CD8-positive, alpha-beta T cell (primary cell): ENCODE measurements at regions of chr17 and their contacts with region 1.

Region 1: GRCh38 chr17:68035523-68036303 is at the start of gene KPNA2:
- DNase-seq: peak; percentile 80 to 96 (median 89)
- ATAC-seq: peak; percentile 84
- H3K4me3 ChIP-seq: peak within 1 kb of the TSS; percentile 97 to 99
- H3K4me3 Mint-ChIP-seq: peak within 1 kb of the TSS; percentile 90
- H3K27ac ChIP-seq: peak within 1 kb of the TSS; percentile 88 to 90
- H3K27ac Mint-ChIP-seq: peak within 1 kb of the TSS; percentile 95
- H3K4me1 ChIP-seq: peaks cover 8% of the 10 kb centered on the region
- H3K4me1 Mint-ChIP-seq: peaks cover 13% of the 10 kb centered on the region
- H3K27me3 ChIP-seq: no peaks in the 10 kb centered on the region
- H3K27me3 Mint-ChIP-seq: no peaks in the 10 kb centered on the region
- CTCF ChIP-seq: no peak
- total RNA-seq, gene KPNA2: 111 to 121 TPM

Region 2: GRCh38 chr17:67717624-67718329 is 317.9 kb before region 1 on chr17 and contains the start of gene NOL11:
- CTCF ChIA-PET with region 1: no interaction called
- POLR2A ChIA-PET with region 1: no interaction called
- intact Hi-C with region 1: loop called in 1 of 2 experiments (anchors 2 kb)
- DNase-seq: peak; percentile 99 to 100 (median 99)
- ATAC-seq: peak; percentile 94
- H3K4me3 ChIP-seq: peak within 1 kb of the TSS; percentile 93 to 98
- H3K4me3 Mint-ChIP-seq: peak within 1 kb of the TSS; percentile 99
- H3K27ac ChIP-seq: peak within 1 kb of the TSS; percentile 90 to 96
- H3K27ac Mint-ChIP-seq: peak within 1 kb of the TSS; percentile 99
- H3K4me1 ChIP-seq: peaks cover 20% of the 10 kb centered on the region
- H3K4me1 Mint-ChIP-seq: peaks cover 32% of the 10 kb centered on the region
- H3K27me3 ChIP-seq: no peaks in the 10 kb centered on the region
- H3K27me3 Mint-ChIP-seq: peaks cover 5% of the 10 kb centered on the region
- CTCF ChIP-seq: peak; percentile 72
- total RNA-seq, gene NOL11: 91.0 to 94.0 TPM

Region 3: DNA sequence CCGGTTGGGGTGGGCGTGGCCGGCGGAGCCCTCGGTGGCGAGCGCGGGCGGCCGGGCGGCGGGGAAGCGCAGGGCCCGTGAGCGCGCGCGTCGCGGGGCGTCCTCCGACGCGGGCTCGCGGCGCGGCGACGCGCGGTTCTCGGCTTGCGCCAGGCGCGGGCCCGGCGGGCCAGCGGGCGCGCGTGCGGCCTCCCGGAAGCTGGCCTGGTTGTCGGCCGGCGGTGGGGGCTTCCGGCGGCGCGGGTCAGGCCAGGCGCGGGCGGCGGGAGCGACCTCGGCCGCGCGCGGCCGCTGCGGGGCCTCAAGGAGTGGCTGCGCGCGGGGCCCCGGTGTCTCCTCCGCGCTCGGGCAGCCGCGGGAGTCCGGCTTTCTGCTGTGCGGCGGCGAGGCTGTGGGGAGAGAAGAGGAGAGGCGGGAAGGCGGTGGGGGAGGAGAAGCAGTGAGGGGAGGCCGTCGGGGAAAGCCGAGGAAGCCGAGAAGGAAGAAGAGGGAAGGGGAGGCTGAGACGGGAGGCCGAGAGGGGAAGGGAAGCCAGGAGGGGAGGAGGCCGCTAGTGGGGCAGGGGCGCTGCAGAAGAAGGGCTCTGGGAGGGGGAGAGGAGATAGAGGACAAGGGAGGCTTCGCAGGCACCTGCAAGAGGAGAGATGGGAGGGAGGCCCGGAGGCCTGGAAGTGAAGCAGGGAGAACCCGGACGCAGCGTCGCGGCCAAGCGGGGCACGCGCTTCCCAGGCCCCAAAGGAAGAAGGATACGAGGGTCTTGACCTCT is 41.9 kb before region 1 on chr17:
- CTCF ChIA-PET with region 1: no interaction called
- POLR2A ChIA-PET with region 1: interaction called, 4 read pairs
- intact Hi-C with region 1: loop called in 1 of 2 experiments (anchors 1 kb)
- DNase-seq: peak in 4 of 9 experiments; percentile 57 to 89 (median 63)
- ATAC-seq: peak; percentile 59
- H3K4me3 ChIP-seq: peak overlapping the region; percentile 60 to 65
- H3K4me3 Mint-ChIP-seq: peak overlapping the region; percentile 86
- H3K27ac ChIP-seq: peak overlapping the region; percentile 42 to 65
- H3K27ac Mint-ChIP-seq: peak overlapping the region; percentile 22
- H3K4me1 ChIP-seq: peaks cover 28% of the 10 kb centered on the region
- H3K4me1 Mint-ChIP-seq: peaks cover 32% of the 10 kb centered on the region
- H3K27me3 ChIP-seq: no peaks in the 10 kb centered on the region
- H3K27me3 Mint-ChIP-seq: peaks cover 20% of the 10 kb centered on the region
- CTCF ChIP-seq: no peak

Region 4: GRCh38 chr17:68101075-68101992 is 65.6 kb after region 1 on chr17:
- CTCF ChIA-PET with region 1: no interaction called
- POLR2A ChIA-PET with region 1: no interaction called
- intact Hi-C with region 1: loop called (anchors 2 to 5 kb)
- DNase-seq: peak; percentile 38 to 83 (median 67)
- ATAC-seq: peak; percentile 70
- H3K4me3 ChIP-seq: peak overlapping the region; percentile 75 to 83
- H3K4me3 Mint-ChIP-seq: peak overlapping the region; percentile 96
- H3K27ac ChIP-seq: peak overlapping the region; percentile 73 to 88
- H3K27ac Mint-ChIP-seq: peak overlapping the region; percentile 97
- H3K4me1 ChIP-seq: peaks cover 12% of the 10 kb centered on the region
- H3K4me1 Mint-ChIP-seq: peaks cover 42% of the 10 kb centered on the region
- H3K27me3 ChIP-seq: no peaks in the 10 kb centered on the region
- H3K27me3 Mint-ChIP-seq: no peaks in the 10 kb centered on the region
- CTCF ChIP-seq: no peak

Region 5: GRCh38 chr17:68133346-68134045 is 97.8 kb after region 1 on chr17:
- CTCF ChIA-PET with region 1: no interaction called
- POLR2A ChIA-PET with region 1: no interaction called
- intact Hi-C with region 1: no loop called
- DNase-seq: no peak
- ATAC-seq: no peak
- H3K4me3 ChIP-seq: no peak overlapping the region
- H3K4me3 Mint-ChIP-seq: no peak overlapping the region
- H3K27ac ChIP-seq: no peak overlapping the region
- H3K27ac Mint-ChIP-seq: no peak overlapping the region
- H3K4me1 ChIP-seq: no peaks in the 10 kb centered on the region
- H3K4me1 Mint-ChIP-seq: no peaks in the 10 kb centered on the region
- H3K27me3 ChIP-seq: no peaks in the 10 kb centered on the region
- H3K27me3 Mint-ChIP-seq: no peaks in the 10 kb centered on the region
- CTCF ChIP-seq: no peak

Region 6: GRCh38 chr17:68205251-68205807 is 169.6 kb after region 1 on chr17:
- CTCF ChIA-PET with region 1: interaction called, 3 read pairs
- POLR2A ChIA-PET with region 1: no interaction called
- intact Hi-C with region 1: loop called in 1 of 2 experiments (anchors 5 kb)
- DNase-seq: peak; percentile 87 to 96 (median 93)
- ATAC-seq: peak; percentile 70
- H3K4me3 ChIP-seq: peak overlapping the region; percentile 68 to 78
- H3K4me3 Mint-ChIP-seq: peak overlapping the region; percentile 88
- H3K27ac ChIP-seq: peak overlapping the region; percentile 77 to 78
- H3K27ac Mint-ChIP-seq: peak overlapping the region; percentile 93
- H3K4me1 ChIP-seq: peaks cover 23% of the 10 kb centered on the region
- H3K4me1 Mint-ChIP-seq: peaks cover 37% of the 10 kb centered on the region
- H3K27me3 ChIP-seq: no peaks in the 10 kb centered on the region
- H3K27me3 Mint-ChIP-seq: no peaks in the 10 kb centered on the region
- CTCF ChIP-seq: peak; percentile 89

Region 7: DNA sequence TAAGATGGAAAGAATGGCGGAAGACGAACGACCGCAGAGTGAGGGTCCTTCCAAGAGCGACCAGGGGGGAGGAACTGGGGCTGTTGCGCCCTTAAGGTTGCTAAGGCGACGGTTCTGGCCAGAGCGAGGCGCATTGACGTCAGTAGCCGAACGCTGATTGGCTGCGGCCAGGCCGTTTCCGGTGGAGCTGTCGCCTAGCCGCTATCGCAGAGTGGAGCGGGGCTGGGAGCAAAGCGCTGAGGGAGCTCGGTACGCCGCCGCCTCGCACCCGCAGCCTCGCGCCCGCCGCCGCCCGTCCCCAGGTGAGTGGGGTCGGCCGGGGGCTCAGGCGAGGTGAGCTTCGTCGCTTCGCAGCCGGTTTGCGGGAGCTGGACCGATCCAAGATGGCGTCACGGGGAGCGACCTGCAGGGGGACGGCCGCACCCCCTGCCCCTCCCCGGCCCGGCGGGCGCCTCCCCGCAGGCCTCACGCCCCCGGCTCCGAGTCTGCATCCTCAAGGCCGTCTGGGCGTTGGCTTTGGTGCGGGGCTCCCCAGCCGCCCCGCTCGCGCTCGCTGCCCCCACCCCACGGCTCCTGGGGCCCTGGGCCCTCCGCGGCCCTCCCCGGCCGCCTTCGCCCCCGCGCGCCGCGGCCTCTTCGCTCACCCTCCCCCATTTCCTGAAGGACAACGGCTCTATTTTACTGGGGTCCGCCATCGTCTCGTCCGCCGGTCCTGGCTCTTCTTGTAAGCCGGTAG is 476.7 kb after region 1 on chr17 and contains the start of gene PRKAR1A:
- CTCF ChIA-PET with region 1: no interaction called
- POLR2A ChIA-PET with region 1: no interaction called
- intact Hi-C with region 1: loop called in 1 of 2 experiments (anchors 1 kb)
- DNase-seq: peak; percentile 88 to 98 (median 94)
- ATAC-seq: peak; percentile 79
- H3K4me3 ChIP-seq: peak within 1 kb of the TSS; percentile 85 to 87
- H3K4me3 Mint-ChIP-seq: peak within 1 kb of the TSS; percentile 100
- H3K27ac ChIP-seq: peak within 1 kb of the TSS; percentile 99
- H3K27ac Mint-ChIP-seq: peak within 1 kb of the TSS; percentile 100
- H3K4me1 ChIP-seq: peaks cover 22% of the 10 kb centered on the region
- H3K4me1 Mint-ChIP-seq: peaks cover 54% of the 10 kb centered on the region
- H3K27me3 ChIP-seq: no peaks in the 10 kb centered on the region
- H3K27me3 Mint-ChIP-seq: no peaks in the 10 kb centered on the region
- CTCF ChIP-seq: no peak
- total RNA-seq, gene PRKAR1A: 61.2 to 63.5 TPM